ENCODE measurements at regions of chr1 and their contacts with region 1.

Region 1: GRCh38 chr1:17606826-17607440 is 67.4 kb downstream of the ARHGEF10L start:
- DNase-seq: peak; percentile 60
- ATAC-seq: peak; percentile 79
- H3K4me3 ChIP-seq: no peak overlapping the region
- H3K27ac ChIP-seq: no peak overlapping the region
- H3K4me1 ChIP-seq: peaks cover 6% of the 10 kb centered on the region
- H3K27me3 ChIP-seq: no peaks in the 10 kb centered on the region
- CTCF ChIP-seq: peak; percentile 94
- POLR2A ChIP-seq: no peak
- RAD21 ChIP-seq: peak; percentile 98

Region 2: GRCh38 chr1:17259233-17259873 is 347.6 kb before region 1 on chr1:
- CTCF ChIA-PET with region 1: no interaction called
- POLR2A ChIA-PET with region 1: no interaction called
- dilution Hi-C with region 1: no loop called
- in situ Hi-C with region 1: no loop called
- intact Hi-C with region 1: no loop called
- DNase-seq: peak; percentile 63
- ATAC-seq: peak; percentile 90
- H3K4me3 ChIP-seq: no peak overlapping the region
- H3K27ac ChIP-seq: no peak overlapping the region
- H3K4me1 ChIP-seq: peaks cover 7% of the 10 kb centered on the region
- H3K27me3 ChIP-seq: peaks cover 15% of the 10 kb centered on the region
- CTCF ChIP-seq: no peak
- POLR2A ChIP-seq: no peak
- RAD21 ChIP-seq: no peak

Region 3: DNA sequence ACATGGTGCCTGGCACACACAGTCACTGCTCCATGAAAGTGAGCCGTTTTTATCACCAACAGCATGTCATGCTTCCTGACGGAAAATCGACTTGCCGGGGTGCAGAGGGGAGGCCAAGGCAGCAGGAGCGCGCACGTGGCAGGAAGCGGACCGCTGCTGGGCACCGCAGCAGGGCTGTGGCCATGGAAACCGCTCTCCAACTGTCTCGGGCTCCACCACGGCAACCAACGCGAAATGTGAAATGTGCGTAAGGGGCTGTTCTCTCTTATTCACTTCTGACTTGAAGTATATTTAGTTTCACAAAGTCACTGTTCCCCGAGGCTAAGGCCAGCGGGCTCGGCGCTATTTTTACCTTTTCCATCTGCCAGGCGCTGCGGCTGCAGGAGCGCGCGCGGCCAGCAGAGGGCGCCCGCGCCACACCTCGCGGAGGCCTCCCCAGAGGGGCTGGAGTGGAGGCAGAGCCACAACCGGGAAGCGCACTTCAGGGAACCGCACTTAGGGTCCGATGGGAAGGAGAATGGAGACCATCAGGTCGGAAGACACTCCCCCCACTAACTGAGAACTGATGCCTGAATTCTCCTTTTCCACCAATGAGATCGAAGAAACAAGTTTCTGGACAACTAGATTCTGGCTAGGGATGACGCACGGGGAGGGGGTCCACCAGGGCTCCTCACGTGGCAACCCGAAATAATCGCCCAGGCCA is 187.2 kb before region 1 on chr1:
- CTCF ChIA-PET with region 1: no interaction called
- POLR2A ChIA-PET with region 1: no interaction called
- dilution Hi-C with region 1: no loop called
- in situ Hi-C with region 1: no loop called
- intact Hi-C with region 1: loop called (anchors 2 kb)
- DNase-seq: peak; percentile 36
- ATAC-seq: peak; percentile 87
- H3K4me3 ChIP-seq: no peak overlapping the region
- H3K27ac ChIP-seq: no peak overlapping the region
- H3K4me1 ChIP-seq: peaks cover 6% of the 10 kb centered on the region; the same call in 1 of the 2 replicates
- H3K27me3 ChIP-seq: no peaks in the 10 kb centered on the region
- CTCF ChIP-seq: peak; percentile 92
- POLR2A ChIP-seq: no peak
- RAD21 ChIP-seq: peak; percentile 82

Region 4: DNA sequence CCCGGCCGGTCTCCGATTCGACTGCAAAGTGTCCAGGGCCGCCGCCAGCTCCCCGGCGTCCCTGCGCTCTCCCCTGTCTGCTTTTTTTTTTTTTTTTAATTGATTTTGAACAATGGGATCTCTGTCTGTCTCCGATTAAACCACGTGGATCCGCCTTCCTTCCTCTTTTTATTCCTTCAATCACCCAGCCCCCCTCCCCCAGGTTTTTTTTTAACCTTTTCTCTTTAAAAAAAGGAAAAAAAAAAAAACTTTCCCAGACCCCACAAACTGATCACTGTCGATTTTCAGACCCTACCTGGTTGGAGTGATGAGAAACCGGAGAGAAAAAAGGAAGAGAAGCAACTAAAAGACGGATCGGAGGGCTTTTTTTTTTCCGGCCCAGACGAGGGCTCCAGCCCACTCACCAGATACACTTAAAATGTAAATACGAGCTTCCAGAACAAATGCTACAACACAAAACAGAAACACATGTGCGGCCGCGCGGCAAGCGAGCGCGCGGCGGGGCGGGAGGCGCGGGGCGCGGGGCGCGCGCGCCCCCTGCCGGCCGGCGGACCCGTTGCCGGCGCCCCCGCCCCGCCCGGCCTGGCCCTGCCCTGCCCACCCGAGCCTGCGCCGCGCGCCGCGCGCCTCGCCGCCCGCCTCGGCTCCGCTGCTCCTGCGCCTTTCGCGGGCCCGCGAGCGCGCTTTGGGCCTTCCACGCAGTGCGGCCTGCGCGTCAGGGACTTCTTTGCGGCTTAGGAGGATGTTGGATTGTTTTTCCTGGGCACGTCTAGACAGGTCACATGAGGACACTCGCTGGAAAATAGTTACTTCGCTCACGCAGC is 167.5 kb before region 1 on chr1 and contains the start of gene RCC2:
- CTCF ChIA-PET with region 1: no interaction called
- POLR2A ChIA-PET with region 1: no interaction called
- dilution Hi-C with region 1: no loop called
- in situ Hi-C with region 1: no loop called
- intact Hi-C with region 1: loop called (anchors 5 kb)
- DNase-seq: peak; percentile 80
- ATAC-seq: peak; percentile 77
- H3K4me3 ChIP-seq: peak within 1 kb of the TSS; percentile 90
- H3K27ac ChIP-seq: peak within 1 kb of the TSS; percentile 92
- H3K4me1 ChIP-seq: peaks cover 22% of the 10 kb centered on the region
- H3K27me3 ChIP-seq: no peaks in the 10 kb centered on the region
- CTCF ChIP-seq: peak; percentile 35
- POLR2A ChIP-seq: peak; percentile 80
- RAD21 ChIP-seq: no peak
- total RNA-seq, gene RCC2: 24.0 and 24.2 TPM in 2 replicates

Region 5: DNA sequence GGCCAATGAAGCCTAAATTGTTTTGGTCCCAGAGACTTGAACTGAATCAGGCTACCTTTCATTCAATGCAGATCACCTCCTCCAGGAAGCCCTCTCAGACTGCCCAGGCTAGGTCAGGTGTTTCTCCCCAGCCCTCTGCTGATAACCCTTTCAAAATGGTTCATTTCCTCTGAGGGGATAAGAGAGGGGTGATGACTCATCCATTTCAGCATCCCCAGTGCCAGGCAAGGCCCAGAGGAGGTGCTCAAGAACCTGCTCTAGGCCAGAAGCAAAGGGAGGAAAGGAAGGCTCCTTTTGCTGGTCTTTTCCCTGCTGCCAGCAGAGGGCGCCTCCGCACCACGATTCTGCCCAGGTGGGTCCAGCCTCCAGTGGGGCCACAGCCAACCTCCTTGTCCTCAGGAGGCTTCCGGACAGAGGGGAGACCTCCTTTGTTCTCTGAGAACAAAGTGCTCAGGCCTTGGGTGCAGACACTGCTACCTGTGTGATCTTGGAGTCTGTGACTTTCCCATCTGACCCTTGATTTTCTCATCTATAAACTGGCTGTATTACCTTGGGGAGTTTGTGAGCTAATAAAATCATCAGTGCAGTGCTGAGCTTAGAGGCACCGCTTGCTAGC is 112.7 kb before region 1 on chr1:
- CTCF ChIA-PET with region 1: interaction called, 12 read pairs
- POLR2A ChIA-PET with region 1: no interaction called
- dilution Hi-C with region 1: no loop called
- in situ Hi-C with region 1: no loop called
- intact Hi-C with region 1: loop called (anchors 2 kb)
- DNase-seq: peak; percentile 69
- ATAC-seq: peak; percentile 97
- H3K4me3 ChIP-seq: no peak overlapping the region
- H3K27ac ChIP-seq: no peak overlapping the region
- H3K4me1 ChIP-seq: peaks cover under 1% of the 10 kb centered on the region; the same call in 1 of the 2 replicates
- H3K27me3 ChIP-seq: peaks cover 5% of the 10 kb centered on the region; the same call in 1 of the 2 replicates
- CTCF ChIP-seq: peak; percentile 91
- POLR2A ChIP-seq: no peak
- RAD21 ChIP-seq: peak; percentile 93

Region 6: DNA sequence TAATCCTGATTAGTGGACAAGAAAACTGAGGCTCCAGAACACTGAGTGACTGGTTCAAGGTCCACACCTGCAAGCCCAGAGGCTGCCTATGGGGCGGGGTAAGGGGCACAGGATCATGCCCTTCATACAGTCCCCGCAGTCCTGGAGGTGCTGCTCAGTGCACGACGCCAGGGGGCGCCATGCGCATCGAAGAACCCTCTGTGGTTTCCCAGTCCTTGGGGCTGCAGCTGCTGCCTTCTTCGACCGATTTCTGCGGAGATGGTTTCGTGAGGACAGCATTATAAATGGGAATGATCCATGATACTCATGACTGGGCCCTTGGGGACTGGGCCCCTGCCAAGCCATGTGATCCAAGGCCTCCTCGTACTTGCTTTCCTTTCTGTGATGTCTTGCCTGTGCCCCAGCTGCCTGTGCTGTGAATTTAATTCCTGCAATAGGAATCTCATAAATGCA is 104.6 kb before region 1 on chr1:
- CTCF ChIA-PET with region 1: interaction called, 53 read pairs
- POLR2A ChIA-PET with region 1: no interaction called
- dilution Hi-C with region 1: no loop called
- in situ Hi-C with region 1: loop called (anchors 5 kb)
- intact Hi-C with region 1: loop called (anchors 1 kb)
- DNase-seq: peak; percentile 85
- ATAC-seq: peak; percentile 99
- H3K4me3 ChIP-seq: no peak overlapping the region
- H3K27ac ChIP-seq: no peak overlapping the region
- H3K4me1 ChIP-seq: no peaks in the 10 kb centered on the region
- H3K27me3 ChIP-seq: peaks cover 3% of the 10 kb centered on the region; the same call in 1 of the 2 replicates
- CTCF ChIP-seq: peak; percentile 93
- POLR2A ChIP-seq: peak; percentile 39; the same call in 1 of the 2 replicates
- RAD21 ChIP-seq: peak; percentile 92

Region 7: GRCh38 chr1:17540255-17541001 is 66.5 kb before region 1 on chr1:
- CTCF ChIA-PET with region 1: no interaction called
- POLR2A ChIA-PET with region 1: no interaction called
- dilution Hi-C with region 1: no loop called
- in situ Hi-C with region 1: no loop called
- intact Hi-C with region 1: loop called (anchors 5 kb)
- DNase-seq: no peak
- ATAC-seq: peak; percentile 71
- H3K4me3 ChIP-seq: peak overlapping the region; percentile 79
- H3K27ac ChIP-seq: peak overlapping the region; percentile 85
- H3K4me1 ChIP-seq: peaks cover 13% of the 10 kb centered on the region
- H3K27me3 ChIP-seq: no peaks in the 10 kb centered on the region
- CTCF ChIP-seq: no peak
- POLR2A ChIP-seq: no peak
- RAD21 ChIP-seq: no peak

Region 8: DNA sequence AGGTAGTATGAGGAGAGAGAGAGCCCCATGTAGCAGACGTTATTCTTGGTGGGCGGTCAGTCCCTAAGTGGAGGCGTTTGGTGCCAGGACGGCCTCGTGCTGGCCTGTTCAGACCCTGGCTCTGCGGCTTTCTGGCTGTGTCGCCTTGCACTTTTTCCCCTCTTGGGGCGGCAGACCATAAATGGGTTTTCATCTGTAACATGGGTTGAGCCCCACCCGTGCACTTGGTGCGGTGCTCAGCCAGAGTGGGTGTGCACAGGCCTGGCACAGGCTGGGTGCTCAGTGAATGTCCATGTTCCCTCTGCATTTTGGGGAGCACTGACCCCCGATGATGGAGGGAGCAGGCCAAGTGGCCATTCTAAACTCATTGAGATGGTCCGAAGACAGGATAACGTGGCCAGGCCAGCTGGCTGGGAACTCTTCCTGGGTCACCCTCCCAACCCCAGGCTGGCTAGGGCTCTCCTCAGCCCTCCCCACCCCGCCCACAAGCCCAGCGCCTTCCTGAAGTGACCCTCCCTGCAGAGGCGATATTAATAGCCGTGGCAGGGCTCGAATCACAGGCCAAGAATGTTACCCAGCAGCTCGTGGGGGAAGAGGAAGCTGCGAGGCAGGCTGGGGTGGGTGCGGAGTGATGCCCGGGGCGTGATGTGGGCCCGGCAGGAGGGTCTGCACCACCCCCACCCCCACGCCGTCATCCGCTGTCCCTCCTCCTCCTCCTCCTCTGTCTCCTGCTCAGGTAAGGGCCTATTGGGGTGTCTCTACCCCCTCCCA is 11.0 kb after region 1 on chr1:
- CTCF ChIA-PET with region 1: interaction called, 10 read pairs
- POLR2A ChIA-PET with region 1: no interaction called
- dilution Hi-C with region 1: no loop called
- in situ Hi-C with region 1: no loop called
- intact Hi-C with region 1: no loop called
- DNase-seq: peak; percentile 43
- ATAC-seq: peak; percentile 88
- H3K4me3 ChIP-seq: no peak overlapping the region
- H3K27ac ChIP-seq: no peak overlapping the region; the same call in 1 of the 2 replicates
- H3K4me1 ChIP-seq: peaks cover 11% of the 10 kb centered on the region
- H3K27me3 ChIP-seq: no peaks in the 10 kb centered on the region
- CTCF ChIP-seq: no peak
- POLR2A ChIP-seq: no peak
- RAD21 ChIP-seq: no peak

Region 9: DNA sequence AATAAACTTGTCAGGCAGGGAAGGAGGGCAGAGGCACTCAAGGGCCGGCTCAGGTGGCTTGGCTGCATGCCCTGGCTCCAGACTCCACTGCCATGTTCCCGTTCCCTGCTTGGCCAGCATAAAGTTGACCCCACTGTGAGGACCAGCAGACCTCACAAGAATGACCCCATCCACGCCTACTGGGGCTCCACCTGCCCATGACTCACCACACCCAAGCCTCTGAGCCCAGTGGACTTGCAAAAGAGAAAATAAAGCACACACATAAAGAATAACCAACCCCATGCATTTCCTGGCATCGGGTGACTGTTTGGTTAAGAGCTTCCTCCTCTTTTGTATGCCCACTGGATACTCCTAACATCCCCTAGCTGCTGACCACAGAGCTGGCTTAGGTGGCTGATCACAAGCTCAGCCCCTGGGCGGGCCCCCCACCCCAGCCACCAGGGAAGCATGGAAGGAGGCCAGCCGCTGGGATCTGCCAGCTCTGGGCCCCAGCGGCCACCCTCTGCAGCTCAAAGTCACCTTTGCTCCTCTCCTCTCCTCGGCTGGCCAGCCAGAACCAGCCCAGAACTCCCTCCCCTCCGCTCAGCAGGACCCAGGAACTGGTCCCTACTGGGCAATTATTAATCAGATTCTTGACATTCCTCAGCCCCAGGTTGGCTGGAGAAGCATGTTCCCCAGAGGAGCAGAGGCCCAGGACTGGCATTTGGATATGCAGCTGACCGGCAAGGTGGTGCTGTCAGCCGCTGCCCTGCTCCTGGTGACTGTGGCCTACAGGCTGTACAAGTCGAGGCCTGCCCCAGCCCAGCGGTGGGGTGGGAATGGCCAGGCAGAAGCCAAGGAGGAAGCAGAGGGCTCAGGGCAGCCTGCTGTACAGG is 873.6 kb after region 1 on chr1 and contains the start of gene KLHDC7A:
- CTCF ChIA-PET with region 1: no interaction called
- POLR2A ChIA-PET with region 1: no interaction called
- dilution Hi-C with region 1: no loop called
- in situ Hi-C with region 1: no loop called
- intact Hi-C with region 1: no loop called
- DNase-seq: no peak
- ATAC-seq: no peak
- H3K4me3 ChIP-seq: no peak within 1 kb of the TSS
- H3K27ac ChIP-seq: no peak within 1 kb of the TSS
- H3K4me1 ChIP-seq: no peaks in the 10 kb centered on the region
- H3K27me3 ChIP-seq: no peaks in the 10 kb centered on the region
- CTCF ChIP-seq: no peak
- POLR2A ChIP-seq: no peak
- RAD21 ChIP-seq: no peak
- total RNA-seq, gene KLHDC7A: not detected in 2 replicates

Measured in IMR-90 (cell line).